Posterior cingulate gyrus (tissue), 11 donors: ENCODE measurements at regions of chr12 and their contacts with region 1.

Region 1: DNA sequence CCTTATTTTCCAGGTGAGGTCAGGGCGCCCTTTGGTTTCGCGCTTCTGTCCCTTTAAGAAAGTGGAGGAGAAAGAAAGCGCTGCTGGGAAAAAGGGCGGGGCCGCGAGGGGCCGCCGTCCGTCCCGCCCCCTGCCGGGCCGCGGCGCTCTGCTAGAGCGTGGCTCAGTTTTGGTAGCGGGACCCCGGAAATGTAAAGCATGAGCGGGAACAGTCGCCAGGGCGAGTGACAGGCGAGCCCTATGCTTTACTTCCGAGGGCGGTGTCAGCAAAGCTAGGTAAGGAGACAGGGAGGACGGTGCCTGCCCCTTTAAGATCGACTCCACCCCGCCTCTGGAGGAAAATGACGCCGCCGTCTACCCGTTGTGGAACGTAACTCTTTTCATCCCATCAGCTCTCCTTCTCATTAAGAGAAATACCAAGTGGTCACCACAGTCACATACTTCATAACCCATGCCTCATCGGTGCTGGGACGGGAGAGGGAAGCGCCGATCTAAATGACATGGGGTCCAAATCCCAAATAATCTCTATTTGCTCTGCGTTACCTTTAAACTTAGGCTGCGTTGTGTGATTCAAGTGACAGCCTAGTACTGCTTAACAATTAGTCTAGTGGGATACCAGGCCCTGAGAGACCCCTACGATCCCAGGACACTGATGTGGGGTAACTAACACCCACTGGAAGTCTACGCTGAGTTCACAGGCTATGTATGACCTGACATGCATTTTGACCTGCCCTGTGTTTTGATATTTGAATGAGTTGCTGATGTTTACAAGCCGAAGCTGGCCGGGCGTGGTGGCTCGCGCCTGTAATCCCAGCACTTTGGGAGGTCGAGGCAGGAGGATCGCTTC is at the start of gene ETFBKMT:
- DNase-seq: peak; percentile 82 to 98 (median 88)

Region 2: GRCh38 chr12:31728917-31729640 is 69.8 kb after region 1 on chr12 and contains the start of gene AMN1:
- intact Hi-C with region 1: loop called (anchors 2 kb)
- DNase-seq: peak; percentile 96 to 100 (median 98)

Region 3: DNA sequence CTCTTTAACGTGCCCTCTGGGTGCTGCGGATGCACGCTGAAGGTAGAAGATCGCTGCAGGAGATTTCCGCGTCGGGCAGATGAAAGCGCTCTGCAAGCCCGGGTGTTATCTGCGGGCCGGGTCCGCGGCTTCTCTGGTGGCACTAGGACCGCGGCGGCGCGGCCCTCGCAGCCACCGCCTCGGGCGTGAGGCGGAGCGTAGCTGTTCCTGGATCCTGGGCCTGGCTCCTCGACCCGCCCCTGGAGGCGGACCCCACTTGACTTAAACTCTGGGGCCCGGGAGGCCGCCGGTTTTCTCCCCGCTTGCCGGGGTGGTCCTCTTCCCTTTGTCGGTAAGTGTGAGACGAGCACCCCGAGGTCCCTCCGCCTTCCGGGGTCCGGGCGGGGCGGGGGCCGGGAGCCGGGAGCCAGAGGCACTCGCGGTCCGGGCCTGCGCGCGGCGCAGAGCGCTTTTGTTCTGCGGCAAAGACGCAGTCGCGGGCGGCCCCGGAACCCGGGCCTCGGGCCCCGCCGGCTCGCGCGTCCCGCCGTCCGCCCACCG is 299.9 kb after region 1 on chr12 and contains the start of gene RESF1:
- intact Hi-C with region 1: loop called (anchors 1 kb)
- DNase-seq: peak; percentile 72 to 98 (median 84)

Region 4: GRCh38 chr12:31989571-31990362 is 330.5 kb after region 1 on chr12:
- intact Hi-C with region 1: no loop called
- DNase-seq: no peak

Region 5: DNA sequence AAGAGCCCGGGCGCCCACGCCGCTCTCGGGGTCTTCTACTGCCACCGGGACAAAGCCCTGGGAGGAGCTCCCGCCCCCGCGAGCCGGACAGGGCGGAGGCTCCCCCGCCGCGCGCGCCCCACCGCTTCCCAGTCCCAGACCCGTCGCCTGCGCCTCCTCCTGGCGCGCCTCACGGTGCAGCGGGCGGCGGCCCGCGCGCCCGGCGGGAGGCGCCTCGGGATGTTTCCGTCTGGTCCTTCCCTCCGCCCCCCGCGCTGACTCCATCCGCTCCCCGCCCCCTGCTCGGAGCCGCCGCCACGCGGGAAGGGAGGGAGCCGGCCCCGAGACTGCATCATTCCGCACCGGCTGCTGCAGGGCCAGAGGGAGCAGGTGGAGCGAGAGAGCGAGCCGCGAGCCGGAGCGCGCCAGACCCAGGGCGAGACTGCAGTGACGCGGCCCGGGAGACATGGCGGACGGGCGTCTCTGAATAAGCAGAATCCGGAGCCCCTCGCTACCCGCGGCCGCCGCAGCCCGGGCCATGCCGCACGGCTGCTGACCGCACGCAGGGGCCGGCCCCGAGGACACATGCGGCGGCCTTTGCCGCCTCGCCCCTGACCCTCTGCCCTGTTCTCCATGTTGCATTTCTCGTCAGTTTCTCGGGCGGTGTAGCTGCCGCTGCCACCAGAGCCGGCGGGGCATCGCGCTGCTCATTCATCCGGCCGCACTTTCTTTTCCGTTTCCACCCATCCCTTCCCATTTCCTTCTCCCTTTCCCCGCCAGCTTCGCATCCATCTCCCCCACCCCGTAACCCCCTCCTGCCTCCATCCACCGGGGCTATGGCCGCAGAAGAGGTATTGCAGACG is 447.4 kb after region 1 on chr12 and contains the start of gene BICD1:
- intact Hi-C with region 1: loop called (anchors 5 kb)
- DNase-seq: peak; percentile 86 to 98 (median 90)

Region 6: DNA sequence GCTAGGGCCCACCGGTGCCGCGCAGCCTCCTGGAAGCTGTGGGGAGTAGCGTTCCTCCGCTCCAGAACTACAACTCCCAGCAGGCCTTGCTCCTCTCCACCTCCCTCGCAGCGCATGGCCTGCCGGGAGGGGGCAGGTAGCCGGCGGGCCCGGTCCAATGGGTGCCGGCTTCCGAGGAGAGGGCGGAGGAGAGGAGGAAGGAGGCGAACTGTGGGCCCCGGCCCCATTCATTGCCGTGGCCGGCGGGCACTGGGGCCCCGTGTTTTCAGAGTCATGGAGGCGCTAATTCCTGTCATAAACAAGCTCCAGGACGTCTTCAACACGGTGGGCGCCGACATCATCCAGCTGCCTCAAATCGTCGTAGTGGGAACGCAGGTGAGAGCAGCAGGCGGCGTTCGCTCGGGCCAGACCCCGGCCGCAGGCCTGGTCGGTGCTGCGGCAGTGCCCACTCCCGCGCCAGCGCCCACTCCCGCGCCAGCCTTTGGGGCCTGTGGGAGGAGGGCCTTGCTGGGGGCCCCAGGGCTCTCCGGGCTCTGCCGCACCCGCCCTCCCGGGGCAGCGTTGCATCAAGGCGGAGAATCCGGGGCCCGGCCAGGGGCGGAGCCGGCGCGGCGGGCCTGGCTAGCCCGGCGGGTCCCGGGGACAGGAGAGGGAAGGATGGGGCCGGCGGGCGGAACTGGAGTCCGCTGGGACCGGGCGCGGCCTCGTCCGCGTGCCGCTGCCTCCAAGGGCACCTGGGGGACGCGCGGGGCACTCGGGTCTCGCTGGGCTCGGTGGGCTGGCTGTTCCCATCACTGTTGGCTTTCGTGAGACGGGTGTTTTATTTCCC is 1020.0 kb after region 1 on chr12 and contains the start of gene DNM1L:
- intact Hi-C with region 1: loop called (anchors 5 kb)
- DNase-seq: peak; percentile 91 to 99 (median 95)